PC-9 (cell line): ENCODE measurements at regions of chrX and their contacts with region 1.

Region 1: DNA sequence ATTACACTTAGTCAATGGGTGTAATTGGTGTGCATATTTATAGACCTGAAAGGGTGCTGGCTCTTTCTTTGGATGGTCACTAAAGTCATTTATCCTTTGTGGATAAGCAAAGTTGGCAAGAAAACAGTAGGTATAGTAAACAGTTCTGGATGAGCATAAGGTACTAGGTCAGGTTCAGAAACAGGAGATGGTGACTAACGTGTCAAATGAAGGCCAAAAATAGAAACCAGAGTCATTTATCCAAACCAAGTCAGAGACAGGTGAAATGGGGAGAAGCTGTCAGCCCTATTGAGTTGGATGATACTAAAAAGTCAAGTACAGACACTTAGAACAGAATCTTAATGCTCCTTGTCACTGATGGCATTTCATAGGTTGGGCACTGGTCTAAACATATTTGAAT is 313.1 kb downstream of the KLHL13 start:
- DNase-seq: no peak
- H3K4me3 ChIP-seq: no peak overlapping the region
- H3K27ac ChIP-seq: no peak overlapping the region
- H3K4me1 ChIP-seq: no peaks in the 10 kb centered on the region
- H3K27me3 ChIP-seq: no peaks in the 10 kb centered on the region
- CTCF ChIP-seq: no peak

Region 2: GRCh38 chrX:117689956-117690355 is 113.5 kb before region 1 on chrX:
- CTCF ChIA-PET with region 1: no interaction called
- POLR2A ChIA-PET with region 1: no interaction called
- intact Hi-C with region 1: no loop called
- DNase-seq: no peak
- H3K4me3 ChIP-seq: no peak overlapping the region
- H3K27ac ChIP-seq: no peak overlapping the region
- H3K4me1 ChIP-seq: no peaks in the 10 kb centered on the region
- H3K27me3 ChIP-seq: no peaks in the 10 kb centered on the region
- CTCF ChIP-seq: no peak

Region 3: GRCh38 chrX:118255921-118256320 is 452.5 kb after region 1 on chrX:
- CTCF ChIA-PET with region 1: interaction called, 10 read pairs
- POLR2A ChIA-PET with region 1: no interaction called
- intact Hi-C with region 1: no loop called
- DNase-seq: no peak
- H3K4me3 ChIP-seq: no peak overlapping the region
- H3K27ac ChIP-seq: no peak overlapping the region
- H3K4me1 ChIP-seq: no peaks in the 10 kb centered on the region
- H3K27me3 ChIP-seq: no peaks in the 10 kb centered on the region
- CTCF ChIP-seq: no peak